ENCODE measurements at regions of chr2 and their contacts with region 1.

Region 1: DNA sequence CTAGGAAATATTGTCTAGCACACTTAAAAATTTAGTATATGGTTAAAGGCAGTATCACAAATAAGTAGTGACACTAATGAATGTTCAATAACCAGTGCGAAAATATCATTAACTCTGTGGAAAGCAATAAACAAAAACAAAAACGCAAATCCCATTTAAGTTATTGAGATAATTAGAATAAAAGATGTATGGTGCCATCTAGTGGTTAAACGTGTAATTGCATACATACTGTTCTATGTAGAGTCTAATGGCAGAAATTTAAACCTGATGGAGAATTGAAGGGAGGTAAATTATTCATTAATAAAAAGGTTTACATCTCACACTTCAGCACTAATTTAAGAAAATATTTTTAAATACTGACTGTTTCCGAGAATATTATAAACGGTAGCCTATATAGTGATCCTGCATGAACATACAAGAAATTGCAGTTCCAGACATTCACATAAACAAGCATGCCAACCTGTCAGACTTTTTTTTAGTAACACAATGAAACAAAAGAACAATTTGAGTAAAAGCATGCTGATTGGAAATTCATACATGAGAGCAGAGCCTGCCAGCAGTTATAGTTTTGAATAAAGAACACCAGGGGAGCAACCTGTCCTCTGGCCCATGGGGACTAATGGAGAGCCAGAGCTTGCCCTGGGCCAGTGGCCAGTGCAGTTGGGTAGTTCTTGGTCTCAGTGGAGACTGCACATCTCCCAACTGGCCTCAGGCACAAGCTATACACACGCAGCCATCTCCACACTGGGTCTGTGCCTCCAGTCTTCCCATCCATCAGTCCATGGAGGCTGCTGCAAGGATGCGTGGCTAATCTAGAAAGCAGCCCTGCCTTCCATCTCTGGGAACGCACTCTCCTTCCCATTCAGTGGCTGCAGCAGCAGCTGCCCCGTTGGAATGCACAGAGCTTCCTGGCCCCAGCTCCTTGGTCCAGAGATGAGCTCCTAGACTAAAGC is 28.0 kb downstream of the GCG start:
- DNase-seq: peak; percentile 41
- H3K4me3 ChIP-seq: no peak overlapping the region
- H3K27ac ChIP-seq: no peak overlapping the region
- H3K4me1 ChIP-seq: no peaks in the 10 kb centered on the region
- H3K27me3 ChIP-seq: no peaks in the 10 kb centered on the region
- CTCF ChIP-seq: peak; percentile 48 to 96 (median 76)
- POLR2A ChIP-seq: no peak

Region 2: GRCh38 chr2:162007447-162008040 is 116.5 kb before region 1 on chr2:
- intact Hi-C with region 1: loop called (anchors 10 kb)
- DNase-seq: no peak
- H3K4me3 ChIP-seq: no peak overlapping the region
- H3K27ac ChIP-seq: no peak overlapping the region
- H3K4me1 ChIP-seq: no peaks in the 10 kb centered on the region
- H3K27me3 ChIP-seq: no peaks in the 10 kb centered on the region
- CTCF ChIP-seq: peak; percentile 29 to 55 (median 42)
- POLR2A ChIP-seq: no peak

Region 3: GRCh38 chr2:162538954-162539353 is 414.9 kb after region 1 on chr2:
- intact Hi-C with region 1: no loop called
- DNase-seq: no peak
- H3K4me3 ChIP-seq: no peak overlapping the region
- H3K27ac ChIP-seq: no peak overlapping the region
- H3K4me1 ChIP-seq: no peaks in the 10 kb centered on the region
- H3K27me3 ChIP-seq: no peaks in the 10 kb centered on the region
- CTCF ChIP-seq: no peak
- POLR2A ChIP-seq: no peak

Measured in prostate gland (tissue), 2 donors.